Activated T-helper 2 cell treated with anti-CD3 and anti-CD28 coated beads, Interferon-gamma antibody, Interleukin-2, Interleukin-4, amounts not matched to agents 10 μg/mL and 5 μg/mL and 100 μg/mL, durations not matched to agents 14 hours and 24 hours and 36 hours (primary cell): ENCODE measurements at regions of chr7 and their contacts with region 1.

Region 1: DNA sequence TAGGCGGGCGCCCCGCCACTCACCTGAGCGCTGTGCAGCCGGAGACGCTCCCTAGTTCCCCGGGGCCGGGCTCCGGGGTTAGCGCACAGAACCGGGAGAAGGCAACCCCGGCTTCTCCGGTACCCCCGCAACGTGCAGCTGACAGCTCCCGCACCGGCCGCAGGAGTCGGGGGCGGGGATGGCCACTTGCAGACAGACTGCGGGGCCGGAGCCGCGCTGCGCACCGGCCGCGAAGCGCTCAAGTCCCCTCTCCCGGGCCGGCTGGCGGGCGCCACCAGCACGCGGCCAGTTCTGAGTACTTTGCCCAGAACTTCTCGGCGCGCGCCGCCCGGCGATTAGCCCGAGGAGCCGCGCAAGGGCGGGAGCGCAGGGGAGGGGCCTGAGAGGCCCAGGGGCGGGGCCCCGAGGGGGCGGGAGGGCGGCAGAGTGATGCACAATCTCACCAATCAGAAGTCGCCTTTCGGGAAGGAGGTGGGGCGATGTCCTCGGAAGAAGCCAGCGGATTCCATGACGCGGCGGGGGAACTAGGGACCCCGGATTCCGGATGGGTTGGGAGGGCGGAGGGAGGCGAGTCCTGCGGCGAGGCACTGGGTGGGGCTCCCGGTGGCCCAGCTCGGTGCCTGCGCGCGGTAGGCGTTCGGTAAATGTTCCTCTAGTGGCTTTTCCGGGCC is at the start of gene OSBPL3:
- DNase-seq: peak; percentile 92
- H3K4me3 Mint-ChIP-seq: peak within 1 kb of the TSS; percentile 95
- H3K27ac Mint-ChIP-seq: peak within 1 kb of the TSS; percentile 97
- H3K4me1 Mint-ChIP-seq: peaks cover 60% of the 10 kb centered on the region
- H3K27me3 Mint-ChIP-seq: no peaks in the 10 kb centered on the region
- total RNA-seq, gene OSBPL3: 74.2 and 76.2 TPM in 2 replicates

Region 2: DNA sequence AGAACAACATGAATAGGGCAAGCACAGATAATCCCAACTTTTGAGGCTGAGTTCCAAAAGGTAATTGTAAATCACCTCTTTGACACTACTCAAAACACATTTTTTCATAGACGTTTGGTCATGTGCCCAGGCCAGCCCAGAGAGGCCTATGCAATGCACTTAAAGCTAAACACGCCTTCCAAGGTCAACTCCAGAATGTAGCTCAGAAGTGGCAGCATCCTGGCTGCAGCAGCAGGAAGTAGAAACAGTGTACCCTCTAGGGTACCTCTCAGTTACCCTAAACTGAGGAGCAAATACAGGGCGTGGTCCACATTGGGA is 58.7 kb before region 1 on chr7:
- intact Hi-C with region 1: loop called (anchors 1 kb)
- DNase-seq: no peak
- H3K4me3 Mint-ChIP-seq: peak overlapping the region; percentile 41
- H3K27ac Mint-ChIP-seq: peak overlapping the region; percentile 91
- H3K4me1 Mint-ChIP-seq: peaks cover 93% of the 10 kb centered on the region
- H3K27me3 Mint-ChIP-seq: no peaks in the 10 kb centered on the region

Region 3: DNA sequence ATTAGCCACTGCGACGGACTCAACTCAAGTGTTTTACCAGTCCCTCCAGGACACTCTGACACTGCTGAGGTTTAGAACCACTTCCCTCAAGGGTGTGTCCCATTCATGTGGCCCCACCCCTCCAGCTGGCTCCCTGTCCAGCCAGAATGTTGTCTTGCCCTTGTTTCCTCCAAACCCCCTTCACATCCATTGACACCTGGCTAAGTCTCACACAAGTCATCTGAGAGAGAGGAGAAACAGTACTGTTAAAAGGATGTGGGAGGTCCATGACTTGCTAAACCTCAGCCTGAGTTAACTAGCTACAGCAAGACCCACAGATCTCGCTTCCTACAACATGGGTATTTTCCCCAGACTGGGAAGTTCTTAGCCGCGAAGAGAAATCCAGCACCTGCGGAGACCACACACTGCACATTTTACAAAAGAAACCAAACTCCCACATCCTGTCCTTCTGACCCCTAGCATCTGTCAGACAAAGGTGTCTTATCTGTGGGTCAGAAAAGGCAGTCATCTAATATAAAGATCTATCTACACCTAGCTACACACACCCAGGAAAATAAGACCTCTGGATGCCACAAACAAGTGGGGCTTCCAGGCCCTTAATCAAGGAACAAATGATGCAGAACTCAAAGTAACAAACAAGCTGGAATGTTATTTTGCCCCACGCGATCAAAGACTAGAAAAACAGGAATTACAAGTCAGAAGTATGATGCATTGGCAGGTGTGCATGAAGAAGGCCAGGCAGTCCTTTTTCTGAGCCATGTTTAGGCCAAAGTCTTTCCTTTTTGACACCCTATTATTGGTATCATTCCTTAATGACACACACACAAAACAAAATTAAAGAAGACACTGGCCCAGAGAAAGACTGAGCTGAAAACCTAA is 13.9 kb before region 1 on chr7:
- intact Hi-C with region 1: loop called (anchors 1 kb)
- DNase-seq: peak; percentile 60
- H3K4me3 Mint-ChIP-seq: peak overlapping the region; percentile 31
- H3K27ac Mint-ChIP-seq: peak overlapping the region; percentile 80
- H3K4me1 Mint-ChIP-seq: peaks cover 79% of the 10 kb centered on the region
- H3K27me3 Mint-ChIP-seq: no peaks in the 10 kb centered on the region

Region 4: DNA sequence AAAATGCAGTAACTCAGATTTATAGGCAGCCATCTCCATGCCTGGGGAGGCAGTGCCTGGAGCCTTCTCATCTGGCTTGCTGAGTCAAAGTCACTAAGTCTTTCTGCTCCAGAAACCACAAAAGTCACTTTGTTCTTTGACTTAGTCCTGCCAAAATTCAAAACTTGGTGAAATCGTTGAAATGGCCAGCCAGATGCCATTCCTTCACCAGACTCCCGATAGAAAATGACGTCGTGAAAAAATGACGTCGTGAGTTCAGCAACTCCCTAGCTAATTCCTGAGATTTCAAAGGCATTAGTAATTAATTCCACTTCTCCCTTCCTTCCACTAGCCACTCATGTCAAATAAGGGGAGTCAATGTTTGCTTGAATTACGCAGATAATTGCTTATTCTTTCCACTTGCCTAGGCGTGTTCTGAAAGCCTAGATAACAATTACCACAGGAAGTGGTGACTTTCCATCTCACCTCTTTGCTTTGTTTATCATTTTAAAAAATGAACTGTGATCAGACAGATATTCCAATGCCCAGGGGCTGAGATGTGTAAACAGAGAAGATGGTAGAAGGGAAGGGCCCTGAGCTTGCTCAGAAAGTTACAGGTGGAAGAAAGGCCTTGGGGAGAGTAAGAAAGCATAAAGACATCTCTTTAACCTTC is 48.5 kb after region 1 on chr7:
- intact Hi-C with region 1: loop called (anchors 1 kb)
- DNase-seq: peak; percentile 32
- H3K4me3 Mint-ChIP-seq: peak overlapping the region; percentile 32
- H3K27ac Mint-ChIP-seq: peak overlapping the region; percentile 82
- H3K4me1 Mint-ChIP-seq: peaks cover 51% of the 10 kb centered on the region
- H3K27me3 Mint-ChIP-seq: peaks cover 17% of the 10 kb centered on the region

Region 5: GRCh38 chr7:25075459-25075858 is 95.5 kb after region 1 on chr7:
- intact Hi-C with region 1: loop called (anchors 2 kb)
- DNase-seq: no peak
- H3K4me3 Mint-ChIP-seq: no peak overlapping the region
- H3K27ac Mint-ChIP-seq: no peak overlapping the region
- H3K4me1 Mint-ChIP-seq: peaks cover 20% of the 10 kb centered on the region
- H3K27me3 Mint-ChIP-seq: peaks cover 8% of the 10 kb centered on the region

Region 6: GRCh38 chr7:25093268-25093826 is 113.3 kb after region 1 on chr7:
- intact Hi-C with region 1: loop called (anchors 2 kb)
- DNase-seq: peak; percentile 66
- H3K4me3 Mint-ChIP-seq: no peak overlapping the region
- H3K27ac Mint-ChIP-seq: no peak overlapping the region
- H3K4me1 Mint-ChIP-seq: peaks cover 16% of the 10 kb centered on the region
- H3K27me3 Mint-ChIP-seq: peaks cover 9% of the 10 kb centered on the region

Region 7: GRCh38 chr7:25537662-25538375 is 557.8 kb after region 1 on chr7:
- intact Hi-C with region 1: no loop called
- DNase-seq: no peak
- H3K4me3 Mint-ChIP-seq: no peak overlapping the region
- H3K27ac Mint-ChIP-seq: no peak overlapping the region
- H3K4me1 Mint-ChIP-seq: no peaks in the 10 kb centered on the region
- H3K27me3 Mint-ChIP-seq: peaks cover 26% of the 10 kb centered on the region